ENCODE measurements at regions of chr4 and their contacts with region 1.

Region 1: DNA sequence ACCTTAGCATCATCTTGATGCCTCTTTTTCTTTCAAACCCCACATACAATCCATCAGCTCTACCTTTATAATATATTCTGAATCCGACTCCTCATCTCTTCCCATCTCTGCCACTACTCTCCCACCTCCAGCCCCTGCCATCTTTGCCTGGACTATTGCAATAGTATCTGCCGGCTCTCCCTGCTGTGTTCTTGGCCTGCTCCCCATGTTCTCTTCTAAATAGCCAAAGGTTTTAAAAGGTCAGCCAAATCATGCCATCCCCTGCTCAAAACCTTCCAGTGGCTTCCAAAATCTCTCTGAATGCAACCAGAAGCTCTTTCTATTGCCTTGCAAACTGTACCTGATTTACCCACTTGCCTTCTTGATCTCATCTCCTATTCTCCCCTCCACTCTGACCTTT is 266.0 kb downstream of the PTTG2 start:
- DNase-seq: no peak
- ATAC-seq: no peak
- H3K4me3 ChIP-seq: no peak overlapping the region
- H3K27ac ChIP-seq: no peak overlapping the region
- H3K4me1 ChIP-seq: peaks cover 5 to 11% of the 10 kb centered on the region in 2 donors
- H3K27me3 ChIP-seq: no peaks in the 10 kb centered on the region

Region 2: DNA sequence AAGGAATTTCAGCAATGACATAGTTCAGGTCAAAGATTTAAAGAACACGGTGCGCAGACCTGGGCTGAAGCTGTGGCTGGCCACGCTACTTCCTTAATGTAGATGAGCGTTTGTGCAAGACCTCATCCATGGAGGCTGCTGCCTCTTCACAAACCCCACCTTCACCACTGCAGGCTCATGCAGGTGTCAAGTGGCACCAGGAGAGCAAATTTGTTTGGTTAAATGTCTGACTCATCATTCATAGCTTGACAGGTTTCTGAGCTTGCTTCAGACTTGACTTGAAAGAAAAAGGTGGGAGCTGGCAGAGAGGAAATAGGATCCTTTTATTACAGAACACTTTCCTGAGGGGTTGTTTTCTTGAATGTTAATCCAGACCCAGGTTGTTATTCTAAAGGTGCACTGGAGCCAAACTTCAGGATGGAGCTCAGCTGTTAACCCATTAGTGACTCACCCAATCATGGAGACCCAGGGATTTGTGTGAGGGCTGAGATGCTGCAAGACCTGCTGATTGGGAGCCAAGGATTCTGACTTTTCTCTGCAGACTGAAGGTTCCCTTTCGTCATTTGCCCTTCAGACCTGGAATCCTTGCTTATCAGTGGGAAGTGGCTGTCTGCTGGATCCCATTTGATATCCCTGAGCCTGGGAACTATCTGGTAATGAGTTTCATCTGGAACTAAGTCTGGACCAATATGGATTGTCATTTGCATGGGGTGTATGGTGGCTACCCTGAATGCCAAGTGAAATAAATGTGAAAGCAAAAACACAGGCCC is 49.3 kb after region 1 on chr4:
- intact Hi-C with region 1: loop called in 1 of 2 experiments (anchors 2 kb)
- DNase-seq: no peak
- ATAC-seq: no peak
- H3K4me3 ChIP-seq: no peak overlapping the region
- H3K27ac ChIP-seq: no peak overlapping the region
- H3K4me1 ChIP-seq: no peaks in the 10 kb centered on the region
- H3K27me3 ChIP-seq: no peaks in the 10 kb centered on the region

Measured in aorta (tissue), 5 donors.